ENCODE measurements at regions of chr16 and their contacts with region 1.

Region 1: GRCh38 chr16:72008424-72009216 is at the start of gene DHODH:
- DNase-seq: peak; percentile 99
- ATAC-seq: peak; percentile 99
- H3K4me3 Mint-ChIP-seq: peak within 1 kb of the TSS; percentile 94
- H3K27ac Mint-ChIP-seq: peak within 1 kb of the TSS; percentile 96
- H3K4me1 Mint-ChIP-seq: peaks cover 21% of the 10 kb centered on the region
- H3K27me3 Mint-ChIP-seq: no peaks in the 10 kb centered on the region
- total RNA-seq, gene DHODH: 15.5 to 21.4 TPM

Region 2: GRCh38 chr16:71255721-71256120 is 752.9 kb before region 1 on chr16:
- CTCF ChIA-PET with region 1: no interaction called
- POLR2A ChIA-PET with region 1: no interaction called
- intact Hi-C with region 1: no loop called
- DNase-seq: no peak
- ATAC-seq: peak; percentile 30
- H3K4me3 Mint-ChIP-seq: no peak overlapping the region
- H3K27ac Mint-ChIP-seq: no peak overlapping the region
- H3K4me1 Mint-ChIP-seq: peaks cover 4% of the 10 kb centered on the region
- H3K27me3 Mint-ChIP-seq: peaks cover 16% of the 10 kb centered on the region

Region 3: GRCh38 chr16:71288890-71289733 is 719.5 kb before region 1 on chr16 and contains the start of gene CMTR2:
- CTCF ChIA-PET with region 1: no interaction called
- POLR2A ChIA-PET with region 1: no interaction called
- intact Hi-C with region 1: loop called in 1 of 2 experiments (anchors 10 kb)
- DNase-seq: peak; percentile 95
- ATAC-seq: peak; percentile 97
- H3K4me3 Mint-ChIP-seq: peak within 1 kb of the TSS; percentile 83
- H3K27ac Mint-ChIP-seq: peak within 1 kb of the TSS; percentile 90
- H3K4me1 Mint-ChIP-seq: peaks cover 15% of the 10 kb centered on the region
- H3K27me3 Mint-ChIP-seq: peaks cover 16% of the 10 kb centered on the region
- total RNA-seq, gene CMTR2: 15.8 to 16.5 TPM

Region 4: GRCh38 chr16:71441348-71441781 is 567.3 kb before region 1 on chr16:
- CTCF ChIA-PET with region 1: no interaction called
- POLR2A ChIA-PET with region 1: no interaction called
- intact Hi-C with region 1: no loop called
- DNase-seq: peak; percentile 70
- ATAC-seq: peak; percentile 64
- H3K4me3 Mint-ChIP-seq: no peak overlapping the region
- H3K27ac Mint-ChIP-seq: no peak overlapping the region
- H3K4me1 Mint-ChIP-seq: no peaks in the 10 kb centered on the region
- H3K27me3 Mint-ChIP-seq: peaks cover 22% of the 10 kb centered on the region

Region 5: GRCh38 chr16:71461686-71462648 is 546.7 kb before region 1 on chr16 and contains the start of gene ZNF23:
- CTCF ChIA-PET with region 1: no interaction called
- POLR2A ChIA-PET with region 1: no interaction called
- intact Hi-C with region 1: loop called in 1 of 2 experiments (anchors 1 kb)
- DNase-seq: peak; percentile 88
- ATAC-seq: peak; percentile 96
- H3K4me3 Mint-ChIP-seq: peak within 1 kb of the TSS; percentile 76
- H3K27ac Mint-ChIP-seq: peak within 1 kb of the TSS; percentile 96
- H3K4me1 Mint-ChIP-seq: peaks cover 19% of the 10 kb centered on the region
- H3K27me3 Mint-ChIP-seq: no peaks in the 10 kb centered on the region
- total RNA-seq, gene ZNF23: 9.6 to 10.9 TPM

Region 6: GRCh38 chr16:71723537-71724319 is 284.9 kb before region 1 on chr16:
- CTCF ChIA-PET with region 1: no interaction called
- POLR2A ChIA-PET with region 1: no interaction called
- intact Hi-C with region 1: loop called in 1 of 2 experiments (anchors 1 kb)
- DNase-seq: peak; percentile 87
- ATAC-seq: peak; percentile 87
- H3K4me3 Mint-ChIP-seq: peak overlapping the region; percentile 95
- H3K27ac Mint-ChIP-seq: peak overlapping the region; percentile 68
- H3K4me1 Mint-ChIP-seq: peaks cover 16% of the 10 kb centered on the region
- H3K27me3 Mint-ChIP-seq: no peaks in the 10 kb centered on the region

Region 7: DNA sequence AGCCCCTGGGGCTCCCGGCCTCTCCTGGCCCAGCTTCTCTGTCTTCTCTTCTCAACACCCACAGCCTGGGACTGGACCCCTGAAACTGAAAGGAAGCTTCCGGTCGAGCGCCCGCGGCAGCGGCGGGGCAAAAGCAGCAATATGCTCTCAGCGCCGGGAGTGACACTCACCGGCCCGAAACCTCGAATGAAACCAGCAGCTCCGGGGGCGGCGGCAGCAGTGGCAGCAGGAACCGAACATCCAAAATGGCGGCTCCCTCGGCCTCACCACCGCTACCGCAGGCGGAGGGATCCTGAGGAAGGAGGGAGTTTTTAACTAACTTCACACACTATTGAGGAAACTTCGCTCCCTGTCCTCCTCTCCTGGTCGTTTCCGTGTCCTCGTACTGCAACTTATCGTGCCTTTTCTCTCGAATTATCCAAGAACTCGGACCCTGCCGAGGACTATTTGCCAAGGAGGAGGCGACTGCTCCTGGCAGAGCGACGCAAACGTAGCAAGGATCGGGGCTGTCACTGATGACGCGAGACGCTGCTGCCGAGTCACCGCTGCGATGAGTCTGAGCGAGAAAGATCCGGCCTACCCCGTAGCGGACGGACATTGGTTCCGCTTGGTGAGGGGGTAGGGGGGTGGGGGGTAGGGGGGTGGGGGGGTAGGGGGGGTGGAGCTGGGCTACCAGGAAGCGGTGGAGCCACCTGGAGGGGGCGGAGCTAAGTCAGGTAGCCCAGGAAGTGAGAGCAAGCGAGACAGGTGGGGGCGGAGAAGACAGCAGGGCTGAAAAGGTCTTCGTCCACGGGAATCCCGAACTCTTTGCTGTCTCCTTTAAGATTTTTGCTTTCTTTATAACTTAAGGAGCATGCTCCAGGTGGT is 199.8 kb before region 1 on chr16 and contains the start of gene AP1G1:
- CTCF ChIA-PET with region 1: no interaction called
- POLR2A ChIA-PET with region 1: no interaction called
- intact Hi-C with region 1: loop called in 1 of 2 experiments (anchors 1 kb)
- DNase-seq: peak; percentile 96
- ATAC-seq: peak; percentile 92
- H3K4me3 Mint-ChIP-seq: peak within 1 kb of the TSS; percentile 91
- H3K27ac Mint-ChIP-seq: peak within 1 kb of the TSS; percentile 100
- H3K4me1 Mint-ChIP-seq: peaks cover 48% of the 10 kb centered on the region
- H3K27me3 Mint-ChIP-seq: no peaks in the 10 kb centered on the region
- total RNA-seq, gene AP1G1: 65.5 to 68.8 TPM

Region 8: GRCh38 chr16:71894921-71895678 is 113.5 kb before region 1 on chr16 and contains the start of gene IST1:
- CTCF ChIA-PET with region 1: interaction called, 3 read pairs
- POLR2A ChIA-PET with region 1: no interaction called
- intact Hi-C with region 1: loop called in 1 of 2 experiments (anchors 1 kb)
- DNase-seq: peak; percentile 99
- ATAC-seq: peak; percentile 92
- H3K4me3 Mint-ChIP-seq: peak within 1 kb of the TSS; percentile 96
- H3K27ac Mint-ChIP-seq: peak within 1 kb of the TSS; percentile 94
- H3K4me1 Mint-ChIP-seq: peaks cover 31% of the 10 kb centered on the region
- H3K27me3 Mint-ChIP-seq: no peaks in the 10 kb centered on the region
- total RNA-seq, gene IST1: 170 to 179 TPM

Region 9: DNA sequence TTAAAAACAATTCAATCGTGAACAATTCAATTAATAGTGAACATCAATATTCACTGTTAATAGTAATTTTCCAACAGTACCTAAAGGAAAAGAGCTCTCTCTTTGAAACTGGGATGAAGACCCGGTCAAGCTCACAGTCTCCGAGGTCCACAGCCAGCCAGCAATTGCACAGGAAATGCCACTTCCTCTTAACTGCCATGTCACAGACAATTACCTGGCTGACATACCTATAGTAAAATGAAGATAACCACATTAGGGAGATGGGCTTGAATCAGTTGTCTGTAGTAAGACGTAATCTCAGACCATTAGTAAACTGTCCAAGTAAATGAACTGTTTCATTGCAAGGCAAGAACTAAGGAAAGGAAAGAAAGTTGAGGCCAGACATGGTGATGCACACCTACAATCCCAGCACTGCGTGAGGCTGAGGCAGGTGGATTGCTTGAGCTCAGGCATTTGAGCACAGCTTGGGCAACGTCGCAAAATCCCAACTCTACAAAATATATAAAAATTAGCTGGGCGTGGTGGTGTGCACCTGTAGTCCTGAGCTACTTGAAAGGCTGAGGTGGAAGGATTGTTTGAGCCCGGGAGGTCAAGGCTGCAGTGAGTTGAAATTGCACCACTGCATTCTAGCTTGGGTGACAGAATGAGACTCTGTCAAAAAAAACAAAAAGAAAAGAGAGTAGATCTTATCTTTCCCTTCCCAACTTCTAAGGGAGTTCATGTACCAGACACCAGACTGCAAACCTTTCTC is 45.3 kb before region 1 on chr16:
- CTCF ChIA-PET with region 1: no interaction called
- POLR2A ChIA-PET with region 1: no interaction called
- intact Hi-C with region 1: no loop called
- DNase-seq: no peak
- ATAC-seq: no peak
- H3K4me3 Mint-ChIP-seq: no peak overlapping the region
- H3K27ac Mint-ChIP-seq: no peak overlapping the region
- H3K4me1 Mint-ChIP-seq: no peaks in the 10 kb centered on the region
- H3K27me3 Mint-ChIP-seq: no peaks in the 10 kb centered on the region

Measured in activated CD4-positive, alpha-beta T cell treated with anti-CD3 and anti-CD28 coated beads for 36 hours (primary cell).